ENCODE measurements at regions of chr1 and their contacts with region 1.

Region 1: DNA sequence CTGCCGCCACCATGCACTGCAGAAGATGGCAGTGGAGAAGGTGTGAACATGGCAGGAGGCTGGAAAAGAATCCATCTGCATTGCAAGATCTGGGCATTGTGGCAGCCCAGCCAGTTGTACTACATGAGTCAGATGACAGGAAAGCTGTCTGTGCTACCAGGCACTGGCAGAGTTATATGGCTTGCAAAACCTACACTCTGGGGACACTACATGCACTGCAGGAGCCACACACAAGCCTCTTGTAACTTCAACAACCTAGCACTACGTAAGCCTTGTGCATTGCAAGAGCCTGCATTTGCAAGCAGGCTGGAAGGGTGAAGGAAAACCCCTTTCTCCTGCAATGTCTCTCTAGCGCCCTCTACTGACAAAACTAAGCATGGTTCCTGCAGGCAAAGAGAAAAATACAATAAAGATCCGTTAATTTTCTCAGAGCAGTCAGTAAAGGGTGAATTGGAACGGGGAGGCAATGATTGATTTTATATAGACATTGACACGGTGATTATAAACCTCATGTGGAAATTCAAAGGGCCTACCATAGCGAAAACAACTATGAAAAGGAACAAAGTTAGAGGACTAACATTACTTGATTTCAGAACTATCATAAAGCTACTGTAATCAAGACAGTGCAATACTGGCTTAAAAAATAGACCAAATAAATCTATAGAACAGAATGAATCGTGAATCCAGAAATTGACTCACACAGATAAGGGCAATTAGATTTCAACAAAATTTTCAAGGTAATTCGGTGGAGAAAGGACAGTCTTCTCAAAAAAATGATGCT is 26.2 kb upstream of the DYNLT5 start:
- DNase-seq: peak; percentile 24
- H3K4me3 ChIP-seq: no peak overlapping the region
- CTCF ChIP-seq: peak; percentile 78

Region 2: DNA sequence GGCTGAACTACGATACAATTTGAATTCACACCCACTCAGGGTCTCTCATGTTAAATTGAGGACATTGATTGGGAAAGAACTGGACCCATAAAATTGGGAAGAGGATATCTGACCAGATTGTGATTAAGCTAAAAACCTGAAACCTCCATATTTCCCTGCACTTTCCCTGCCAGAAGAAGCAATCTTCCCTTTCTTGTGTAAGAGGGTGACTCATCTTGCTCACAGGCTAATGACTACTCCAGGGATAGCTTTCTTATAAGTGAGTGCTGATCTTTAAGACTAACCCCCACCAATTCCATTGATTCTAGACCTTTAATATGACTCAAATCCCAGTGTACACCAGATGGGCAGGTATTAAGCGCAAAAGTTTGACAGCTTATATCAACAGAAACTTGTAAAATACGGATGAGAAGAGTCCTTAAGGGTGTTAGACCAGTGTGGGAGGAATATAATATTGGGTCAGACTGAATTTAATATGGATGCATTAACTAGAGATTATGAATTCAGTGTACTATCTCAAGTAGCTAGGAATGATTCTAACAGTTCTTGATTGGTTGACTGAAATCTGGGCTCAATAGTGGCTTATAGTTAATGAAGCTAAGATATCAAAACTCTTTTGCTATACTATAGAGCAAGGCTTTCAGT is 204.2 kb before region 1 on chr1:
- CTCF ChIA-PET with region 1: interaction called, 14 read pairs
- POLR2A ChIA-PET with region 1: no interaction called
- DNase-seq: peak; percentile 73
- H3K4me3 ChIP-seq: no peak overlapping the region
- CTCF ChIP-seq: no peak

Region 3: GRCh38 chr1:66685670-66686069 is 40.4 kb before region 1 on chr1:
- CTCF ChIA-PET with region 1: interaction called, 14 read pairs
- POLR2A ChIA-PET with region 1: no interaction called
- DNase-seq: peak; percentile 21
- H3K4me3 ChIP-seq: no peak overlapping the region
- CTCF ChIP-seq: no peak

Region 4: GRCh38 chr1:66711420-66711819 is 14.7 kb before region 1 on chr1:
- CTCF ChIA-PET with region 1: interaction called, 62 read pairs
- POLR2A ChIA-PET with region 1: interaction called, 4 read pairs
- DNase-seq: no peak
- H3K4me3 ChIP-seq: no peak overlapping the region
- CTCF ChIP-seq: peak; percentile 12